ENCODE measurements at regions of chr3 and their contacts with region 1.

Region 1: GRCh38 chr3:78659386-78659987 is 1108.3 kb downstream of the ROBO1 start:
- DNase-seq: peak; percentile 57
- H3K4me3 Mint-ChIP-seq: no peak overlapping the region
- H3K27ac Mint-ChIP-seq: no peak overlapping the region
- H3K4me1 Mint-ChIP-seq: no peaks in the 10 kb centered on the region
- H3K27me3 Mint-ChIP-seq: no peaks in the 10 kb centered on the region
- CTCF ChIP-seq: peak; percentile 63

Region 2: GRCh38 chr3:79032686-79033318 is 373.3 kb after region 1 on chr3:
- CTCF ChIA-PET with region 1: interaction called, 21 read pairs
- POLR2A ChIA-PET with region 1: interaction called, 3 read pairs
- intact Hi-C with region 1: loop called (anchors 1 kb)
- DNase-seq: peak; percentile 66
- H3K4me3 Mint-ChIP-seq: no peak overlapping the region
- H3K27ac Mint-ChIP-seq: no peak overlapping the region
- H3K4me1 Mint-ChIP-seq: no peaks in the 10 kb centered on the region
- H3K27me3 Mint-ChIP-seq: no peaks in the 10 kb centered on the region
- CTCF ChIP-seq: peak; percentile 53

Region 3: GRCh38 chr3:79497447-79498111 is 838.1 kb after region 1 on chr3:
- CTCF ChIA-PET with region 1: no interaction called
- POLR2A ChIA-PET with region 1: no interaction called
- intact Hi-C with region 1: loop called (anchors 5 kb)
- DNase-seq: peak; percentile 28
- H3K4me3 Mint-ChIP-seq: no peak overlapping the region
- H3K27ac Mint-ChIP-seq: no peak overlapping the region
- H3K4me1 Mint-ChIP-seq: no peaks in the 10 kb centered on the region
- H3K27me3 Mint-ChIP-seq: peaks cover 20% of the 10 kb centered on the region
- CTCF ChIP-seq: peak; percentile 47